GM12878 (cell line): ENCODE measurements at regions of chr6 and their contacts with region 1.

Region 1: DNA sequence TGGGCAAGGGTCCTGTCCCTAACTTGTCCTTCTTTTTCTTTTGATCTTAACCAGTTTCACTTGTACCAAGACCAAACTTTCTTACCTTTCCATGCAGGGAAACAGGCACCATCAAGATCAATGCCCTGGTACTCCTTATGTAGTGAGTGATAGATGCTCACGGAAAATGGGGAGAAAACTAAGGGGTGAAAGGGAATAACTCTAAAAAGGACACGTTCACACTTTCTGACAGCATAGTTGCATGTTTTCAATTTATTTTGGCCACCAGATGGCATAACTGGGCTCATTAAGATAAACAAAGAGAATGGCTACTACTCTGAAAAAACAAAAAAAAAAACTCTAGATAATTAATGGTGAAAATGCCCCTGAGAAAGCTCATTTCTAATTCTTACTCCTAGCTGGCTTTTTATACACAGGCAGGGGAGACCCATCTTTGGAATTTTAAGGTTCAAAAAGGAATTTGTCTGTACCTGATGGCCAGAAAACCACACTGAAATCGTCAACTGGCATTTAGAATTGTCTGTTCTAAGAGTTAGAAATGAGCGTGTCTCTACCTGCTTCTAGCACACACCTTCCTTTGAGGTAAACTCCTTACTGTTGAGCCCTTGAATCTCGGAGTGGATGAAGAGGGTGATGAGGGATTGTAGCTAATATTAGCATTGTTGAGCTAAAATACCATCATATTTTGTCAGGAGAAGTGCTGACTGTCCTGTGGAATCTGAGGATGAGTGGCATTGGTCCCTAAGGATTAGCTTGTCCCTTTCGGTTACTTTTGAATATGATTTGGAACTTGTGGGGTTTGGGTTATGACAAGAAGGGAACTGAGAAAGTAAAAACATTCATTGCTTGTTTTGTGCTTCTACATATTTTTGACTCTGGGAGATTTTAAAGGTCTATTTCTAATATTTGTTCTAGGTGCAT is 62.2 kb upstream of the DDR1 start:
- DNase-seq: no peak
- ATAC-seq: peak; percentile 52
- H3K4me3 ChIP-seq: no peak overlapping the region
- H3K27ac ChIP-seq: peak overlapping the region; percentile 42
- H3K4me1 ChIP-seq: peaks cover 21% of the 10 kb centered on the region
- H3K27me3 ChIP-seq: no peaks in the 10 kb centered on the region
- CTCF ChIP-seq: peak; percentile 50 to 61 (median 52); a peak in 5 of 6 replicates
- EP300 ChIP-seq: 0 out of 4 replicates have a peak, but pooled peaks of 1 of the 2 experiments have one; percentile 15
- POLR2A ChIP-seq: no peak
- RAD21 ChIP-seq: peak; percentile 54

Region 2: DNA sequence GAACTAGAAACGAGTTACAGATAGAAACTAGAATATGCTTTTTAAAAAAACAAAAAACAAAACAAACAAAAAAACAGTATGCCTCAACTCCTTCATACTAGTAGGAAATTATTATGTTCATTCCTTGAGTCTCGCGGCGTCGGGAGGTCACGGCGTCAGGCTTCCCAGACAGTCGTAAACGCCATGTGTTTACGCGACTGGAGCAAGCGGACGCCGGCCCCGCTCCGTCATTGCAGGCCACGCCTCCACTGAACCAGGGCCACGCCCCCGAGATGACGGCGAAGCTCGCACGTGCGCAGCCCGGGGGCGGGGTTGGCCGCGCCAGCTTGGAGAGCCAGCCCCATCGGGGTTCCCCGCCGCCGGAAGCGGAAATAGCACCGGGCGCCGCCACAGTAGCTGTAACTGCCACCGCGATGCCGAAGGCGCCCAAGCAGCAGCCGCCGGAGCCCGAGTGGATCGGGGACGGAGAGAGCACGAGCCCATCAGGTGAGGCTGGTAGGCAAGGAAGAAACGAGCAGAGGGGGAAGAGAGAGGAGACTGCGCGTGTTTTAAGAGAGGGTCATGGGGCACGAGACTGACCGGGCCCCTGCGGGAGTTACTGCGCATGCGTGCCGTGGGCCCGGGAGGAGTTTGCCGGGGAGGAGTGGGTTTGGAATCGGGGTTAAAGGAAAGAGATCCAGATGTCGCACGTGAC is 250.9 kb before region 1 on chr6 and contains the start of gene ABCF1:
- CTCF ChIA-PET with region 1: no interaction called
- POLR2A ChIA-PET with region 1: no interaction called
- RAD21 ChIA-PET with region 1: no interaction called
- SMC1A ChIA-PET with region 1: no interaction called
- in situ Hi-C with region 1: no loop called
- intact Hi-C with region 1: no loop called
- DNase-seq: peak; percentile 85
- ATAC-seq: peak; percentile 94
- H3K4me3 ChIP-seq: peak within 1 kb of the TSS; percentile 89
- H3K27ac ChIP-seq: peak within 1 kb of the TSS; percentile 94
- H3K4me1 ChIP-seq: peaks cover 15% of the 10 kb centered on the region
- H3K27me3 ChIP-seq: no peaks in the 10 kb centered on the region
- CTCF ChIP-seq: no peak
- EP300 ChIP-seq: 0 out of 4 replicates have a peak, but pooled peaks of 1 of the 2 experiments have one; percentile 23
- POLR2A ChIP-seq: peak; percentile 96
- RAD21 ChIP-seq: no peak
- polyA plus RNA-seq, gene ABCF1: 21.3 to 26.1 TPM

Region 3: GRCh38 chr6:30640476-30640875 is 181.6 kb before region 1 on chr6:
- CTCF ChIA-PET with region 1: no interaction called
- POLR2A ChIA-PET with region 1: no interaction called
- RAD21 ChIA-PET with region 1: no interaction called
- SMC1A ChIA-PET with region 1: no interaction called
- in situ Hi-C with region 1: no loop called
- intact Hi-C with region 1: no loop called
- DNase-seq: no peak
- ATAC-seq: peak; percentile 34; the same call in 1 of the 3 replicates
- H3K4me3 ChIP-seq: no peak overlapping the region
- H3K27ac ChIP-seq: no peak overlapping the region
- H3K4me1 ChIP-seq: no peaks in the 10 kb centered on the region
- H3K27me3 ChIP-seq: no peaks in the 10 kb centered on the region
- CTCF ChIP-seq: peak in 1 of 3 experiments; percentile 5; a peak in 1 of 6 replicates
- EP300 ChIP-seq: no peak
- POLR2A ChIP-seq: no peak
- RAD21 ChIP-seq: no peak

Region 4: GRCh38 chr6:30742316-30743098 is 79.6 kb before region 1 on chr6 and contains the start of gene FLOT1:
- CTCF ChIA-PET with region 1: interaction called, 40 read pairs
- POLR2A ChIA-PET with region 1: interaction called, 12 read pairs
- RAD21 ChIA-PET with region 1: interaction called, 45 read pairs
- SMC1A ChIA-PET with region 1: interaction called, 16 read pairs
- in situ Hi-C with region 1: no loop called
- intact Hi-C with region 1: no loop called
- DNase-seq: peak; percentile 80
- ATAC-seq: peak; percentile 80
- H3K4me3 ChIP-seq: peak within 1 kb of the TSS; percentile 95
- H3K27ac ChIP-seq: peak within 1 kb of the TSS; percentile 72
- H3K4me1 ChIP-seq: peaks cover 23% of the 10 kb centered on the region
- H3K27me3 ChIP-seq: no peaks in the 10 kb centered on the region
- CTCF ChIP-seq: no peak
- EP300 ChIP-seq: peak in 1 of 2 experiments; percentile 12; a peak in 1 of 4 replicates
- POLR2A ChIP-seq: peak; percentile 83
- RAD21 ChIP-seq: no peak
- polyA plus RNA-seq, gene FLOT1: 12.3 to 16.8 TPM

Region 5: DNA sequence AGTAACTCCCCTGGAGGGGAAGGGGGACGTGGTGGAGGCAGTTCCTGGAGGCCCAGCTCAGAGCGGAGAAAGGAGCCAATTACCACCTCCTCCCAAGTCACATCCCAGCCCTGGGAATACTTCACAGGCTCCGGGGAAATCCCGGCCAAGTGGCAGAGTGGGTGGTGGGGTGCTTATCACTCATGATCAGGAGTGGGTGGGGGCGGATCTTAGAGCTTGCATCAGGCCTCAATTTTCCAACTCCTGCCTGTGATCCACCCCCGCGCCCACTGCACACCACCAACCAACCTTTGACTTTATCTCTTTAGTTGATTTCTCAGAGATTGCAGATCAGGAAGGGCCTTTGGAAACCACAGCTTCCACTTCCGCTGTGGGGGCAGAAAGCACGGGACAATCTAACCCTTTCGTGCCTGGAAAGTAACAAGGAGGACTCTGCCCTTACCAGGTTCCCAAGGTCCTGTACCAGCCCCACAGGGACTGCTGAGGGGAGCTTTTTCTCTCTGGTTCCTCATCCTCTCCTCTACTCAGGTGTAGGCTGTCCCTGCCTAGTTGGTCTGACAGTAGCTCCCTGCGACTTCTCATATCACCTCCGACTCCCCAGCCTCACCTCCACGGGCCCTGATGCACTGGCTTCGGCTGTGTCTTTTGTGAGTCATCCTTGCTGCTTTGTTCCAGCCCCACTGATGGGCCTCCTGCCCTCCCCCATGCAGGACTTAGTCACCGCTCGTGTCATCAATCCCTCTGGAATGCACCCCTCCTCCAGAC is 52.9 kb before region 1 on chr6:
- CTCF ChIA-PET with region 1: interaction called, 36 read pairs
- POLR2A ChIA-PET with region 1: interaction called, 9 read pairs
- RAD21 ChIA-PET with region 1: interaction called, 19 read pairs
- SMC1A ChIA-PET with region 1: interaction called, 217 read pairs
- in situ Hi-C with region 1: no loop called
- intact Hi-C with region 1: no loop called
- DNase-seq: no peak
- ATAC-seq: peak; percentile 38
- H3K4me3 ChIP-seq: no peak overlapping the region
- H3K27ac ChIP-seq: no peak overlapping the region; the same call in 1 of the 2 replicates
- H3K4me1 ChIP-seq: peaks cover 33% of the 10 kb centered on the region
- H3K27me3 ChIP-seq: no peaks in the 10 kb centered on the region
- CTCF ChIP-seq: no peak
- EP300 ChIP-seq: peak in 1 of 2 experiments; percentile 56; a peak in 2 of 4 replicates
- POLR2A ChIP-seq: no peak
- RAD21 ChIP-seq: no peak

Region 6: DNA sequence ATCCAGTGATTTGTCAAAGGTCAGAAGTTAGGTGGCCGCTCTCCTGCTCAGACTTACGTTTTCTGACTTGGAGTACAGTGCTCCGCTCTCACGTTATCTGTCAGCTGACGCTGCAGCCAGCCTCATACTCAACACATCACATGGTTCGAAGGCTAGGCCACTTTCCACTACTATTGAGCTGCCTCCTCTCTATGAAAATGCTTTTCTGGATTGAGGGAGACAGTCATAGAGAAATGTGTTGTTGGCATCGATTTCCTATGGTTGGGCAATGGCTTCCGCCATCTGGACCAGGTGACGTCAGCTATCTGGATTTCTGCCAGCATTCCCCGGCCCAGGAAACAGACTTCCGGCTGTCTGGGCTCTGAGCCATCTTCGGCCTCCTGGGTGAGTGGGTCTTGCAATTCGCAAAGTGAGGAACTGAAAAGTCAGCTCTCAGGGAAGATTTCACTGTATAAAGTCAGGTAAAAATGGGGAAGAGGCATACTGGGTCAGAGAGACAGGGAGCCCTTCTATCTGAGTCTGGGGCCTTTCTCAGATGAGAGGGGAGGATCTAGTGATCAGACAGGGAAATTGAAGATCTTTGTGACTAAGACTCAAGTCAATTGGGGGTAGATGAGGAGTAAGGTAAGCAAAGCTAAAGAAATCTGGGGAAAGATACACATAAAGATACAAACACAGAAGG is 40.2 kb before region 1 on chr6:
- CTCF ChIA-PET with region 1: interaction called, 10 read pairs
- POLR2A ChIA-PET with region 1: interaction called, 4 read pairs
- RAD21 ChIA-PET with region 1: no interaction called
- SMC1A ChIA-PET with region 1: interaction called, 31 read pairs
- in situ Hi-C with region 1: no loop called
- intact Hi-C with region 1: no loop called
- DNase-seq: peak; percentile 66
- ATAC-seq: peak; percentile 75
- H3K4me3 ChIP-seq: no peak overlapping the region
- H3K27ac ChIP-seq: peak overlapping the region; percentile 44
- H3K4me1 ChIP-seq: peaks cover 15% of the 10 kb centered on the region
- H3K27me3 ChIP-seq: no peaks in the 10 kb centered on the region
- CTCF ChIP-seq: no peak
- EP300 ChIP-seq: no peak; a peak in 1 of 4 replicates
- POLR2A ChIP-seq: no peak
- RAD21 ChIP-seq: no peak

Region 7: DNA sequence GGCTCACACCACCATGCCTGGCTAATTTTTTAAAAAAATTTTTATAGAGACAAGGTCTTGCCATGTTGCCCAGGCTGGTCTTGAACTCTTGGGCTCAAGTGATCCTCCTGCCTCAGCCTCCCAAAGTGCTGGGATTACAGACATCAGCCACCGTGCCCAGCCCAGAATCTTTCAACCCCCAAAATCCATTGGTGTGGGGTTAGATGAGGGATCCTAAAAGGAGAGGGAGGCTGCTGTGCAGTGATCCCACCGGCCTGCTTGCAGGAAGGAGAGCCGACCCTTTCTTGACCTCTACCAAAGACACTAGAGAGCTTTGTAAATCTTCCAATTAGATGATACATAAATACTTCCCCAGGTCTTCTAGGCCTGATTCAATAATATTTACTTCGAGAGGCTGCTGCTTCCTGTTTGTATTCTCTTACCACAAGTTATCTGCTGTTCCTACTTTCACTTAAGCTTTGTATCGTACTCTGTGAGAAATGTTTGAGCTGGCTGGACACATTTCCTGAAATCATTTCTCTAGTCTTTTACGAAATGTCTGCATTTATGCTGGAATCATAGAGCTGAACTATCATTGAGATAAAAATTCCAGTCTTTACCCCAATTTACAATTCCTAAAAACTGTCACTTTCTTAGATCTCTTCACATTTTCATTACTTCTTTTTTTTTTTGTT is 28.5 kb before region 1 on chr6:
- CTCF ChIA-PET with region 1: interaction called, 5 read pairs
- POLR2A ChIA-PET with region 1: interaction called, 6 read pairs
- RAD21 ChIA-PET with region 1: interaction called, 6 read pairs
- SMC1A ChIA-PET with region 1: interaction called, 32 read pairs
- in situ Hi-C with region 1: no loop called
- intact Hi-C with region 1: no loop called
- DNase-seq: peak; percentile 57
- ATAC-seq: peak; percentile 97
- H3K4me3 ChIP-seq: no peak overlapping the region
- H3K27ac ChIP-seq: peak overlapping the region; percentile 84
- H3K4me1 ChIP-seq: peaks cover 16% of the 10 kb centered on the region
- H3K27me3 ChIP-seq: no peaks in the 10 kb centered on the region
- CTCF ChIP-seq: no peak
- EP300 ChIP-seq: 0 out of 4 replicates have a peak, but pooled peaks of 1 of the 2 experiments have one; percentile 36
- POLR2A ChIP-seq: no peak
- RAD21 ChIP-seq: no peak

Region 8: DNA sequence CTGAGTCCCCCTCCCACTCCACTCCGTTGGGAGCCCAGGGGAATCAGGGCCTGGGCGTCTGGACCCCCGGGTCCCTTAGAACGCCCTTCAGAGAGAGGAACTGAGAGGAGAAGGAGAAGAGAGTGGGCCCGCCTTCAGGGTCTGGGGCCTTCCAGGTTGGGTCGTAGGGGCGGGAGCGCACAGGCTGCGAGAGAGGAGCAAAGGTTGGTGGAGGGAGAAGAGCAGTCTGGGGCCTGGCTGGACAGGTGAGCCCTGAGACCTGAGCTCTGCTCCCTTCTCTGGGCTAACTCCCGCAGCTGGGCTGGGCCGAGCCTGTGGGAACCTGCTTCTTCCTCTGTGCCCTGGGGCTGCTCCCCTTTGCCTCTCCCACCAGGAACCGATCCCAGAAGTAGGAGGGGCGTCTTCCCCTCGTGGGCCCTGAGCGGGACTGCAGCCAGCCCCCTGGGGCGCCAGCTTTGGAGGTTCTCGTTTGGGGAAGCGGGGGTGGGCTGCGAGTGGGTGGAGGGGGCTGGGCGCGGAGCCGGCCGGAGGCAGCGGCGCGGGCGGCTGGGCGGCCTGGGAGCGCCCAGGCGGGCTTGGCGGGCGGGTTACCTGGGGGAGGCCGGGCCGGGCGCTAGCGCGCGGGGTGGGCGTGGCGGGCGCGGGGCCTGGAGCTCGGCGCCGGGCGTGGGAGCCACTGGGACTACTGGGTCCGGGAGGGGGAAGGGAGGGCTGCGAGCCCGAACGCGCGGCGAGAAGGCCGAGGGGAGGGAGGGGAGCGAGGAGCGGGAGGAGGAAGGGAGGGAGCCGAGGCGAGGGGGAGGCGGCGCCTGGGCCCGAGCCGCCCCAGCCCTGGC is 61.8 kb after region 1 on chr6 and contains the start of gene DDR1:
- CTCF ChIA-PET with region 1: interaction called, 90 read pairs
- POLR2A ChIA-PET with region 1: interaction called, 14 read pairs
- RAD21 ChIA-PET with region 1: interaction called, 144 read pairs
- SMC1A ChIA-PET with region 1: interaction called, 72 read pairs
- in situ Hi-C with region 1: loop called (anchors 5 kb)
- intact Hi-C with region 1: no loop called
- DNase-seq: no peak
- ATAC-seq: peak; percentile 65
- H3K4me3 ChIP-seq: peak within 1 kb of the TSS; percentile 75
- H3K27ac ChIP-seq: peak within 1 kb of the TSS; percentile 81
- H3K4me1 ChIP-seq: peaks cover 38% of the 10 kb centered on the region
- H3K27me3 ChIP-seq: no peaks in the 10 kb centered on the region
- CTCF ChIP-seq: no peak
- EP300 ChIP-seq: no peak
- POLR2A ChIP-seq: peak; percentile 18; the same call in 1 of the 2 replicates
- RAD21 ChIP-seq: no peak
- polyA plus RNA-seq, gene DDR1: 1.1 to 2.2 TPM

Region 9: DNA sequence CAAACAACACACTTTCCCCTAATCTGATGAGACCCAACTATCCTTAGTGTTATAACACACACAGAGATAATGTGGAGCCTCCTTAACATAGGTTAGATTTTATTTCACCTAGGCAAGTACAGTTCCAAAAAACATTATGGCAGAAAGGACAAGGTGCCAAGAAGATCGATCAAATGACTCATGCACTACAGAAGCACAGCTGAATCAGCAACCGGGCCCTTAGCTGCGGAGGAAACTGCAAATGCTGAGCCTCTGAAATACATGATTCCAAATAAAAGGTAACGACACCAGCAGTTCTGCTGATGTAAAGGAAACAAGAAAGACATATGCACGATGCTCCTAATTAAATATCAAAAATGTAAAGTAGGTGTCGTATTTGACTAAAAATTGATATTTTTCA is 141.5 kb after region 1 on chr6:
- CTCF ChIA-PET with region 1: no interaction called
- POLR2A ChIA-PET with region 1: no interaction called
- RAD21 ChIA-PET with region 1: no interaction called
- SMC1A ChIA-PET with region 1: no interaction called
- in situ Hi-C with region 1: no loop called
- intact Hi-C with region 1: no loop called
- DNase-seq: no peak
- ATAC-seq: no peak
- H3K4me3 ChIP-seq: no peak overlapping the region
- H3K27ac ChIP-seq: no peak overlapping the region
- H3K4me1 ChIP-seq: no peaks in the 10 kb centered on the region
- H3K27me3 ChIP-seq: no peaks in the 10 kb centered on the region
- CTCF ChIP-seq: no peak
- EP300 ChIP-seq: no peak
- POLR2A ChIP-seq: no peak
- RAD21 ChIP-seq: no peak

Region 10: GRCh38 chr6:31025595-31025994 is 203.5 kb after region 1 on chr6:
- CTCF ChIA-PET with region 1: no interaction called
- POLR2A ChIA-PET with region 1: no interaction called
- RAD21 ChIA-PET with region 1: no interaction called
- SMC1A ChIA-PET with region 1: no interaction called
- in situ Hi-C with region 1: no loop called
- intact Hi-C with region 1: no loop called
- DNase-seq: no peak
- ATAC-seq: no peak
- H3K4me3 ChIP-seq: no peak overlapping the region
- H3K27ac ChIP-seq: no peak overlapping the region
- H3K4me1 ChIP-seq: no peaks in the 10 kb centered on the region
- H3K27me3 ChIP-seq: no peaks in the 10 kb centered on the region
- CTCF ChIP-seq: no peak
- EP300 ChIP-seq: no peak
- POLR2A ChIP-seq: no peak
- RAD21 ChIP-seq: no peak